WTC11 (cell line): ENCODE measurements at regions of chr18 and their contacts with region 1.

Region 1: GRCh38 chr18:903701-904100 is 970 bp upstream of the ADCYAP1 start:
- DNase-seq: peak; percentile 83
- ATAC-seq: no peak
- H3K4me3 Mint-ChIP-seq: peak overlapping the region; percentile 76
- H3K27ac Mint-ChIP-seq: no peak overlapping the region
- H3K4me1 Mint-ChIP-seq: peaks cover 50% of the 10 kb centered on the region
- H3K27me3 Mint-ChIP-seq: peaks cover 89% of the 10 kb centered on the region
- CTCF ChIP-seq: no peak

Region 2: DNA sequence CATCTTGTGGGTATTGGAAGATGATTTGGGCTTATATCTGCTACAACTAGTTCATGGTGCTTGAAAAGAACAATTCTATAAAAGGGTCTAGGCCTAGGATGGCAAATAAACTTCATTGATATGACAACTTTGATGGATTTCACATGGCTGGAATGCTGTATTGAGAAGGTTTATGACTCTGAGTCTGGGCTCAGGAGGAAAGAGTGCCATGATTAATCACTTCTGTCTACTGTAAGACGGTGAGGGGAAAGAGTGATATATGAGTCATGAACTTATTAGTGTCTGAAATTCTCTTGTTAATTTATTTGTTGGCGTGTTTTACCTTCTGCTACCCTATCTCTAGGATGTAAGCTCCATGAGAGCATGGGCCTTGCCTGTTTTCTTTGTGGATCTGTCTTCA is 16.0 kb before region 1 on chr18:
- CTCF ChIA-PET with region 1: no interaction called
- POLR2A ChIA-PET with region 1: no interaction called
- DNase-seq: no peak
- ATAC-seq: no peak
- H3K4me3 Mint-ChIP-seq: no peak overlapping the region
- H3K27ac Mint-ChIP-seq: no peak overlapping the region
- H3K4me1 Mint-ChIP-seq: no peaks in the 10 kb centered on the region
- H3K27me3 Mint-ChIP-seq: peaks cover 3% of the 10 kb centered on the region
- CTCF ChIP-seq: no peak

Region 3: GRCh38 chr18:1062588-1062987 is 158.9 kb after region 1 on chr18:
- CTCF ChIA-PET with region 1: interaction called, 24 read pairs
- POLR2A ChIA-PET with region 1: interaction called, 3 read pairs
- DNase-seq: peak; percentile 46
- ATAC-seq: peak; percentile 96
- H3K4me3 Mint-ChIP-seq: no peak overlapping the region
- H3K27ac Mint-ChIP-seq: no peak overlapping the region
- H3K4me1 Mint-ChIP-seq: no peaks in the 10 kb centered on the region
- H3K27me3 Mint-ChIP-seq: no peaks in the 10 kb centered on the region
- CTCF ChIP-seq: no peak